Motor neuron (in vitro differentiated cells): ENCODE measurements at regions of chr4 and their contacts with region 1.

Region 1: GRCh38 chr4:8274765-8275547 is 5.4 kb downstream of the HTRA3 start:
- ATAC-seq: peak; percentile 8 to 90 (median 79)
- H3K4me3 ChIP-seq: no peak overlapping the region
- H3K27ac ChIP-seq: peak overlapping the region in 1 of 2 donors; percentile 7
- H3K4me1 ChIP-seq: peaks cover 23 to 34% of the 10 kb centered on the region in 2 donors

Region 2: DNA sequence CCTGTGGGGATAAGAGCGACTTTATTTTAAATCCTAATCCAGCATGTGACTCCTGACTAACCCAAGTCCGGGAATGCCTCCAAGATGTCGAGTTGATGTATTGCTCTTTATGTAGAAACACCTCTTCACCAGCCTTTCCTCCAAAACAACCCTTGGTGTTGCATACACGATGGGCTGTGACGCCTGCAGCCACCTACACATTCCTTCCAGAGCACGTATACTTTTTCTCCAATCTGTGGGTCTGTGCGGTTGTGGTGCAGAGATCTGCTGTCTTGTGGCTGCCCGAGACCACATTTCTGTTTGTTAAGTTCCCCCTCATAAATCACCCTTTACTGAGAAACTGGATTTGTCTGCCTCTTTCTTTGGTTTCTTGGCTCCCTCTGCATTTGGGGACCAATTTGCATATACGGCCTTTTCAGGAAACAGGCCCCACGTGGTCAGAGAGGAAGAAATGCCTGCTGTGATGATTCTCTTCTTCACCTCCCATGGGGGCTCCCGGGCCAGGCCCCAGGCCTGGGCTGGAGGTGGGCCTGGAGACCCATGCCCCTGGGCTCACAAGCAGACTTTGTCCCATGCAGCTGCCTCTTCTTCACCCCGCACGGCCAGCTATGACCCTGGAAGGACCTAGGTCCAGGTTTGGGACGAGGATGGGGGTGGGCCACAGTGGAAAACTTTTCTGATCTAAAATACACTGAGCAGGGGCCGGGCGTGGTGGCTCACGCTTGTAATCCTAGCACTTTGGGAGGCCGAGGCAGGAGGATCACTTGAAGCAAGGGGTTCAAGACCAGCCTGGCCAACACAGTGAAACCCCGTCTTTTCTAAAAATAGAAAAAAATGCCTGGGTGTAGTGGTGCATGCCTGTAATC is 313.9 kb before region 1 on chr4:
- in situ Hi-C with region 1: no loop called
- ATAC-seq: peak; percentile 72 to 87 (median 86)
- H3K4me3 ChIP-seq: no peak overlapping the region
- H3K27ac ChIP-seq: peak overlapping the region; percentile 19 to 69
- H3K4me1 ChIP-seq: peaks cover 23 to 33% of the 10 kb centered on the region in 2 donors

Region 3: GRCh38 chr4:8391972-8392371 is 117.0 kb after region 1 on chr4:
- in situ Hi-C with region 1: loop called in 1 of 9 experiments (anchors 10 kb)
- ATAC-seq: peak in 3 of 8 experiments; percentile 29 to 59 (median 45)
- H3K4me3 ChIP-seq: no peak overlapping the region
- H3K27ac ChIP-seq: peak overlapping the region in 1 of 2 donors; percentile 49
- H3K4me1 ChIP-seq: peaks cover 30 to 42% of the 10 kb centered on the region in 2 donors